ENCODE measurements at regions of chr2 and their contacts with region 1.

Region 1: GRCh38 chr2:46461011-46461674 is 18.2 kb upstream of the TMEM247 start:
- DNase-seq: peak; percentile 58 to 96 (median 84)

Region 2: DNA sequence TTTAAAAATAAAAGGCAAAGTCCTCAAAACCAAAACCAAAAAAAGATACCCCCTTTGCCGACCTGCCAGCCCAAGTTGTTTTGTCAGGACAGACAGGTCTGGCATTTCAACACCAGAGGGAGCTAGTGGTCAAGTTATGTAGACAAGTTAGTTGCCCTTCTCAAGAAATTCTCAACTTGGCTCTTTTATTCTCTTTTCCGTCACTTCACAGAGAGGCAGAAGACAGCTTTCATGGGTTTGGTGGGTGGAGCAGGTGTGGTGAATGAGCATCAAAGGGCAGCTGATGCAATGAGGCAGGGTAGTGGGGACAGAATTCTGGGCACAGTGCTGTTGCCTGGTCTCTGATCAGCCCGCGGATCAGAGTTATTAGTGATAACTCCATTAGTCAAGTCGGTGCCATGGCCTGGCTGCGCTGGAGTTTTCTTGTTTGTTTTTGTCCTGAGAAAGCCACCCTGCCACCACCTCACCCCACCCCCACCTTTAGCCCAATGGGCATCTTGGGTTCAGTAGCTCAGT is 467.6 kb before region 1 on chr2:
- intact Hi-C with region 1: loop called (anchors 1 kb)
- DNase-seq: peak in 3 of 10 donors; percentile 43 to 52 (median 47)

Region 3: GRCh38 chr2:46010925-46011490 is 450.1 kb before region 1 on chr2:
- intact Hi-C with region 1: loop called (anchors 1 kb)
- DNase-seq: no peak

Region 4: DNA sequence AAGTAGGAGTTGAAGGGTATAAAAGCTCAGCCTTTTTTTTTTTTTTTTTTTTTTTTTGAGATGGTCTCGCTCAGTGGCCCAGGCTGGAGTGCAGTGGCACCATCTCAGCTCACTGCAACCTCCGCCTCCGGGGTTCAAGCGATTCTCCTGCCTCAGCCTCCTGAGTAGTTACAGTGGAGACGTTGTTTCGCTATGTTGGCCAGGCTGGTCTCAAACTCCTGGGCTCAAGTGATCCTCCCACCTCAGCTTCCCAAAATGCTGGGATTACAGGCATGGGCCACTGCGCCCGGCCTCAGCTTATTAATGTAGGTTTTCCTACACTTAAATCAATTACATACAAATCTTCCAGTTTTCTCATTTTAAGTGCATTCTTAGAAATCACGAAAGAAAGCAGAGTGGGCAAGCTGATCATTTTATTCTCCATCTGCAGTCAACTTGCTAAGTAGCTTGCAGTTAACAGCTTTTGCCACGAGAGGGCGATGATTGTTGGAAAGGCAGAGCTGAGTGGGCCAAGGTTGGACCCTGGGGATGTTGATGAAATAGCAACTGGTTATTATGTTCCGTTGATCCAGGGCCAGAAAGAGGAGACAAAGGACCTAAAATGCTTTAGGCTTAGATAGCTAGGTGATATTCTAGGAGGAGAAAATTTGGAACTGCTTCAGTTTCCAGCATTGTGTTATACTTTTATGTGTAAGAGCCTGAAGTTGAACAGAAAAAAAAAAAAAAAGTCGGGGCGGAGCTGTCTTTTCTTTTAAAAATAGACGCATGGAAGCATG is 398.3 kb before region 1 on chr2:
- intact Hi-C with region 1: loop called (anchors 2 kb)
- DNase-seq: peak in 9 of 10 donors; percentile 28 to 90 (median 72)

Region 5: GRCh38 chr2:46350030-46350689 is 111.0 kb before region 1 on chr2:
- intact Hi-C with region 1: no loop called
- DNase-seq: no peak

Measured in posterior cingulate gyrus (tissue), 11 donors.